Motor neuron (in vitro differentiated cells): ENCODE measurements at regions of chr9 and their contacts with region 1.

Region 1: DNA sequence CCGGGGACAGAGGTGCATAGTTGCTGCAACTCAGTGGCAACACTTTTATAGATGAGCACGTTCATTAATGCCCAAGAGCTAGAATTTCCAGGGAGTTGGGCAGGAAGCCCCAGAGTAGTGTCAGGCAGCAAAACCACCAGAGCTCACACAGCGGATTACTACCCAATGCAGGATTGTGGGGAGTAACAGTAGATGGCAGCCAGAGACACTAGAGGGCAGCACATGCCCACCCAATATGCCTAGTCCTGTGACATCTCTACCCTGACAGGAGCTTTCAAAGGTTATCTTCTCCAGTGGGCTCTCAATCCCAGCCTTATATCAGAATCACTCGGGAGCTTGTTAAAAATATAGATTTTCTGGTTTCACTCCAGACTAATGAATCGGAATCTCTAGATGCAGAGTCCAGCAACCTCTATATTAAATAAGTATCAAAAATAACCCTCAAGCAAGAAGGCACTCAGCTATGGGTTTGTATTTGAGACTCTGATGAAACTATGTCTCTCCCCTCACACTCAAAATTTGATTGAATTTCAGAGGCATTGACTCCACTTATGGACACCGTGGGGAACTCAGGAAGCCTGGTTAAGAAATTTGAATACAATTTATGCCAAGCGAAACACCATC is 58.4 kb upstream of the PHF24 start:
- ATAC-seq: peak; percentile 100
- H3K4me3 ChIP-seq: no peak overlapping the region
- H3K27ac ChIP-seq: no peak overlapping the region
- H3K4me1 ChIP-seq: no peaks in the 10 kb centered on the region

Region 2: DNA sequence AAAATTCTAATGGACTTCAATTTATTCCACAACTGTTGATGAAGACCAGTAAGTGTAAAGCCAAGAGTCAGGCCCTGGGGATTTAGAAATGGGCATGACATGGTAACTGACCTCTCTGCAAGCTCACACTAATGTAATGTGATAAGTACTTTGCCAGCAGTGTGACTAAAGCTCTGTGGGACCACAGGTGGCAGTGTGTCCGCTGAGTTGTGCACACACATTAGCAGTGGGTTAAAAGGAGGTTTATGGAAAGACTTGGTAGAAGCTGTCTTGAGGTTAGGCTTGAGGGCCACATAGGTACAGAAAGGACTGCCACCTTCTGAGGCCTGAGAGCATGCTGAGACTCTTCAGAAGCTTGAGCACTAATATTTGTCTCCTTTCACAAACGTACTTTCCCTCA is 653.2 kb before region 1 on chr9:
- in situ Hi-C with region 1: no loop called
- ATAC-seq: no peak
- H3K4me3 ChIP-seq: no peak overlapping the region
- H3K27ac ChIP-seq: no peak overlapping the region
- H3K4me1 ChIP-seq: no peaks in the 10 kb centered on the region

Region 3: GRCh38 chr9:34989003-34989945 is 89.6 kb after region 1 on chr9 and contains the start of gene DNAJB5:
- in situ Hi-C with region 1: loop called in 2 of 9 experiments (anchors 10 kb)
- ATAC-seq: peak; percentile 73 to 88 (median 86)
- H3K4me3 ChIP-seq: peak within 1 kb of the TSS; percentile 82 to 99 (median 87)
- H3K27ac ChIP-seq: peak within 1 kb of the TSS; percentile 95 to 98
- H3K4me1 ChIP-seq: peaks cover 62 to 63% of the 10 kb centered on the region in 2 donors
- total RNA-seq, gene DNAJB5: 4.8 to 45.8 (median 30.2) TPM

Region 4: GRCh38 chr9:35138682-35139470 is 239.2 kb after region 1 on chr9:
- in situ Hi-C with region 1: no loop called
- ATAC-seq: no peak
- H3K4me3 ChIP-seq: no peak overlapping the region
- H3K27ac ChIP-seq: no peak overlapping the region
- H3K4me1 ChIP-seq: no peaks in the 10 kb centered on the region